ENCODE measurements at regions of chr19 and their contacts with region 1.

Region 1: GRCh38 chr19:54674021-54674617 is 11.3 kb downstream of the LILRB4 start:
- DNase-seq: no peak
- H3K4me3 ChIP-seq: no peak overlapping the region
- H3K27me3 ChIP-seq: no peaks in the 10 kb centered on the region
- CTCF ChIP-seq: peak; percentile 48

Region 2: GRCh38 chr19:54481322-54481930 is 192.7 kb before region 1 on chr19:
- CTCF ChIA-PET with region 1: interaction called, 46 read pairs
- POLR2A ChIA-PET with region 1: no interaction called
- DNase-seq: no peak
- H3K4me3 ChIP-seq: no peak overlapping the region
- H3K27me3 ChIP-seq: no peaks in the 10 kb centered on the region
- CTCF ChIP-seq: peak; percentile 81

Region 3: GRCh38 chr19:54586397-54586796 is 87.7 kb before region 1 on chr19:
- CTCF ChIA-PET with region 1: no interaction called
- POLR2A ChIA-PET with region 1: no interaction called
- DNase-seq: no peak
- H3K4me3 ChIP-seq: no peak overlapping the region
- H3K27me3 ChIP-seq: no peaks in the 10 kb centered on the region
- CTCF ChIP-seq: no peak

Region 4: DNA sequence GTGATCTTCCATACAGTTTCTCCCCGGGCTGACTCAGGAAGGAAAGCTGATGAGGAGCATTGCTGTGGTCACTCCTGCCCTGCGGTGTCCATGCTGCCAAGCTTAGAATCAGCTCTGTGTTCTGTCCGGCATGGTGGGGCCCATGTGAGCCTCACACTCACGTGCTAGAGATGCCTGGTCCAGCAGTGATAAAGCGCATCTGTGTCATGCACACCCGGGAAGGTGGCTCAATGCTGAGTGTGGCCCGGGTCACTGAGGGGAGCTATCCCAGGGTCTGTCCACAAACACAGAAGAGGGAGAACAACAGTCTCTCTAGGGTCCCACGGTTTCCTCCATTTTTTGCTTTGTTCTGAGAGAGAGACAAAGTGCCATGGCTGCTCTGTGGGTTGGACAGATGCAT is 47.4 kb before region 1 on chr19:
- CTCF ChIA-PET with region 1: no interaction called
- POLR2A ChIA-PET with region 1: no interaction called
- DNase-seq: no peak
- H3K4me3 ChIP-seq: no peak overlapping the region
- H3K27me3 ChIP-seq: no peaks in the 10 kb centered on the region
- CTCF ChIP-seq: no peak

Measured in BJ (cell line).